ENCODE measurements at regions of chr1 and their contacts with region 1.

Region 1: GRCh38 chr1:227072991-227073390 is 132.9 kb downstream of the COQ8A start:
- DNase-seq: no peak
- ATAC-seq: no peak
- H3K4me3 ChIP-seq: no peak overlapping the region
- H3K27ac ChIP-seq: no peak overlapping the region
- H3K4me1 ChIP-seq: no peaks in the 10 kb centered on the region; a peak in 1 of 5 replicates
- H3K27me3 ChIP-seq: no peaks in the 10 kb centered on the region
- CTCF ChIP-seq: no peak
- EP300 ChIP-seq: no peak
- POLR2A ChIP-seq: no peak
- RAD21 ChIP-seq: no peak

Region 2: GRCh38 chr1:227086623-227087022 is 13.6 kb after region 1 on chr1:
- CTCF ChIA-PET with region 1: no interaction called
- POLR2A ChIA-PET with region 1: interaction called, 10 read pairs
- in situ Hi-C with region 1: no loop called
- intact Hi-C with region 1: no loop called
- DNase-seq: no peak
- ATAC-seq: no peak
- H3K4me3 ChIP-seq: no peak overlapping the region
- H3K27ac ChIP-seq: no peak overlapping the region
- H3K4me1 ChIP-seq: no peaks in the 10 kb centered on the region
- H3K27me3 ChIP-seq: no peaks in the 10 kb centered on the region
- CTCF ChIP-seq: no peak
- EP300 ChIP-seq: no peak
- POLR2A ChIP-seq: no peak
- RAD21 ChIP-seq: no peak